H1 (cell line): ENCODE measurements at regions of chr19 and their contacts with region 1.

Region 1: DNA sequence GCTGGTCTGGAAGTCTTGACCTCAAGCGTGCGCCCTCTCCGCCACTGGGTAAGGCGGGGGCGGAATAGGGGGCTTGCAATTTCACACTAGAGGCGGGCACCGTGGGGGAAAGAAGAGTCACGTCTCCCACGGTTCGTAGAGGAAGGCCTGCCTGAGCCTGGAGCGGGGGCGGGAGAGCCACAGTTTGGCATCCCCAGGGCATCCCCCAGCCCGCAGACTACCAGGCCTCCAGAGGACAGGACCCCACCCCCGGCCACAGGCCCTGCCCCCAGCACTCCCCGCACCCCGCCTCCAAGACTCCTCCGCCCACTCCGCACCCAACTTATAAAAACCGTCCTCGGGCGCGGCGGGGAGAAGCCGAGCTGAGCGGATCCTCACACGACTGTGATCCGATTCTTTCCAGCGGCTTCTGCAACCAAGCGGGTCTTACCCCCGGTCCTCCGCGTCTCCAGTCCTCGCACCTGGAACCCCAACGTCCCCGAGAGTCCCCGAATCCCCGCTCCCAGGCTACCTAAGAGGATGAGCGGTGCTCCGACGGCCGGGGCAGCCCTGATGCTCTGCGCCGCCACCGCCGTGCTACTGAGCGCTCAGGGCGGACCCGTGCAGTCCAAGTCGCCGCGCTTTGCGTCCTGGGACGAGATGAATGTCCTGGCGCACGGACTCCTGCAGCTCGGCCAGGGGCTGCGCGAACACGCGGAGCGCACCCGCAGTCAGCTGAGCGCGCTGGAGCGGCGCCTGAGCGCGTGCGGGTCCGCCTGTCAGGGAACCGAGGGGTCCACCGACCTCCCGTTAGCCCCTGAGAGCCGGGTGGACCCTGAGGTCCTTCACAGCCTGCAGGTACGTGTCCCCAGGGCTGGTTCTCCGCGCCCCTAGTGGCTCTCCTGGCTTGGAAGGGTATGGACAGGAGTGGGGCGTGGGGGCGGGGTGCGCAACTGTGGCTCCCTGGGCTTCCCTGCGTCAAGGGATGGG is at the start of gene ANGPTL4:
- DNase-seq: peak in 1 of 2 experiments; percentile 85
- H3K4me3 ChIP-seq: peak within 1 kb of the TSS; percentile 49 to 69 (median 58)
- H3K27ac ChIP-seq: no peak within 1 kb of the TSS
- H3K4me1 ChIP-seq: peaks cover 0 to 15% (median 8%) of the 10 kb centered on the region in 4 experiments; a peak in 6 of 7 replicates
- H3K27me3 ChIP-seq: peaks cover 0 to 26% (median 18%) of the 10 kb centered on the region in 4 experiments; a peak in 6 of 7 replicates
- CTCF ChIP-seq: peak in 1 of 3 experiments; percentile 11; a peak in 1 of 4 replicates
- EP300 ChIP-seq: no peak
- POLR2A ChIP-seq: peak in 1 of 2 experiments; percentile 65; a peak in 2 of 3 replicates
- RAD21 ChIP-seq: no peak
- total RNA-seq, gene ANGPTL4: 1.8 and 2.3 TPM in 2 replicates

Region 2: DNA sequence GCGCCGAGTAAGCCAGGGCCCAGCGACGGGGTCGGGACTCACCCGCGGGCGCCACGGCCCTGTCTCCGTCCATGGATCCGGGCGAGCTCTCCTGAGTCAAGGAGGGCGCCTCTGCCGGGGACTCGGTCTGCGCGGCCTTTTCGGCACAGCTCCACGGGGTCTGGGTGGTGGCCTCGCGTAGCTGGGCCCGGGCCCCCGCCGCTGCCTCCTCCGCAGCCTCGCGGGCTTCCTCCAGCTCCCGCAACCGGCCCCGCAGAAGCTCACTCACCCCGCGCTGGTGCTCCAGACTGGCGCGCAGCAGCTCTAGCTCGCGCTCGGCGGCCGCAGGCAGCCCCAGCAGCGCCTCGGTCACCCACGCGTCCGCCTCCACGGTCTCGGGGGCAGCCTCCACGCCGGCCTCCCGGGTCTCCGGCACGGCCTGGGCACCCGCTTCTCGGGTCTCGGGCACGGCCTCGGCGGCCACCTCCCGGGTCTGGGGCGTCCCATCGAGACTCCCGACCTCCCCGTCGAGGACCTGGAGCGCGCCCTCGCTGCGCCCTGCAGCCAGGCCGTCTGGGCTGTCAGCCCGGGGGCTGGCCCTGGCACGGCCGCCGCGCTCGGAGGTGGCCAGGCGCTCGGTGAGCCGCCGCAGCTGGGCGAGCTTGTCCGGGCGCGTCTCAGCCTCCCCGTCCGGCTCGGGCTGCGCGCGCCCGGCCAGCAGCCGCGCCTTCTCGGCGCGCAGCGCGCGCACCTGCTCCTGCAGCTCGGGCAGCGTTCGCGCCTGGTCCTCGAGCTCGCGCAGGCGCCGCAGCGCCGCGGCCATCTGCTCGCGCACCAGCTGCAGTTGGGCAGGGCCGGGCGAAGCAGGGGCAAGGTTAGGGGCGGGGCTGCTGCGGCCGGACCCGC is 29.4 kb before region 1 on chr19:
- CTCF ChIA-PET with region 1: interaction called, 4 read pairs
- POLR2A ChIA-PET with region 1: interaction called, 11 read pairs
- DNase-seq: peak in 1 of 2 experiments; percentile 83
- H3K4me3 ChIP-seq: peak overlapping the region; percentile 38 to 56 (median 43)
- H3K27ac ChIP-seq: no peak overlapping the region
- H3K4me1 ChIP-seq: peaks cover 0 to 18% (median 10%) of the 10 kb centered on the region in 4 experiments; a peak in 6 of 7 replicates
- H3K27me3 ChIP-seq: peaks cover 21 to 38% (median 33%) of the 10 kb centered on the region in 4 experiments
- CTCF ChIP-seq: no peak
- EP300 ChIP-seq: no peak
- POLR2A ChIP-seq: no peak
- RAD21 ChIP-seq: no peak

Region 3: GRCh38 chr19:8342684-8343482 is 21.2 kb before region 1 on chr19 and contains the start of gene KANK3:
- CTCF ChIA-PET with region 1: interaction called, 10 read pairs
- POLR2A ChIA-PET with region 1: interaction called, 6 read pairs
- DNase-seq: peak; percentile 95 to 99
- H3K4me3 ChIP-seq: peak within 1 kb of the TSS; percentile 50 to 71 (median 56)
- H3K27ac ChIP-seq: no peak within 1 kb of the TSS
- H3K4me1 ChIP-seq: peaks cover 0 to 9% (median 3%) of the 10 kb centered on the region in 4 experiments; a peak in 4 of 7 replicates
- H3K27me3 ChIP-seq: peaks cover 0 to 9% (median 7%) of the 10 kb centered on the region in 4 experiments; a peak in 3 of 7 replicates
- CTCF ChIP-seq: no peak
- EP300 ChIP-seq: no peak
- POLR2A ChIP-seq: no peak
- RAD21 ChIP-seq: no peak
- total RNA-seq, gene KANK3: 2.3 and 2.5 TPM in 2 replicates

Region 4: GRCh38 chr19:8373867-8374813 is 10.1 kb after region 1 on chr19:
- CTCF ChIA-PET with region 1: interaction called, 8 read pairs
- POLR2A ChIA-PET with region 1: interaction called, 11 read pairs
- DNase-seq: no peak
- H3K4me3 ChIP-seq: no peak overlapping the region
- H3K27ac ChIP-seq: no peak overlapping the region
- H3K4me1 ChIP-seq: no peaks in the 10 kb centered on the region
- H3K27me3 ChIP-seq: no peaks in the 10 kb centered on the region
- CTCF ChIP-seq: peak in 2 of 3 experiments; percentile 24 to 31; a peak in 2 of 4 replicates
- EP300 ChIP-seq: no peak
- POLR2A ChIP-seq: no peak
- RAD21 ChIP-seq: peak; percentile 30 to 52; a peak in 3 of 4 replicates